ENCODE measurements at regions of chr7 and their contacts with region 1.

Region 1: GRCh38 chr7:54189330-54189729 is 352.8 kb upstream of the VSTM2A start:
- DNase-seq: no peak
- H3K4me3 ChIP-seq: no peak overlapping the region
- H3K27ac ChIP-seq: no peak overlapping the region
- H3K4me1 ChIP-seq: no peaks in the 10 kb centered on the region
- H3K27me3 ChIP-seq: no peaks in the 10 kb centered on the region
- CTCF ChIP-seq: no peak
- POLR2A ChIP-seq: no peak

Region 2: DNA sequence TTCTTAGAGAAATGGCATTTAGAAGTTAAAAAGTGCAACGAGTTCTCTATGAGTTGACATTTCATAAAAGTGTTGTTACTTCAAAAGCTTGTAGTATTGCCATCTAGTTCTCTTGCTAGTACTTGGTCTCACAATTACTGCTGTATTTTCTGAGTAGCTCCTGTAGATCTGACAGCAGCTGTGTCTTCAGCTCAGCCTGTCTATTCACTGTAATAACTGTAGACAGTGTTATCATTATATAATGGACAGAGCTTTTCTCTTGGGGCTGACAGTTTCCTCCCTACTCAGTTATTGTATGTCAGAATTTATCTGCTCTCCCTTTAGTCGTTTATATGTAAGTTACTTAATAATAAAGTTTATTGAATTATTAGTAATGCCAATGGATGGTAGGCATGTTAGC is 35.9 kb before region 1 on chr7:
- CTCF ChIA-PET with region 1: no interaction called
- POLR2A ChIA-PET with region 1: no interaction called
- dilution Hi-C with region 1: no loop called
- intact Hi-C with region 1: loop called (anchors 1 kb)
- DNase-seq: no peak
- H3K4me3 ChIP-seq: no peak overlapping the region
- H3K27ac ChIP-seq: no peak overlapping the region
- H3K4me1 ChIP-seq: no peaks in the 10 kb centered on the region
- H3K27me3 ChIP-seq: no peaks in the 10 kb centered on the region
- CTCF ChIP-seq: no peak
- POLR2A ChIP-seq: no peak